HCT116 (cell line): ENCODE measurements at regions of chr17 and their contacts with region 1.

Region 1: DNA sequence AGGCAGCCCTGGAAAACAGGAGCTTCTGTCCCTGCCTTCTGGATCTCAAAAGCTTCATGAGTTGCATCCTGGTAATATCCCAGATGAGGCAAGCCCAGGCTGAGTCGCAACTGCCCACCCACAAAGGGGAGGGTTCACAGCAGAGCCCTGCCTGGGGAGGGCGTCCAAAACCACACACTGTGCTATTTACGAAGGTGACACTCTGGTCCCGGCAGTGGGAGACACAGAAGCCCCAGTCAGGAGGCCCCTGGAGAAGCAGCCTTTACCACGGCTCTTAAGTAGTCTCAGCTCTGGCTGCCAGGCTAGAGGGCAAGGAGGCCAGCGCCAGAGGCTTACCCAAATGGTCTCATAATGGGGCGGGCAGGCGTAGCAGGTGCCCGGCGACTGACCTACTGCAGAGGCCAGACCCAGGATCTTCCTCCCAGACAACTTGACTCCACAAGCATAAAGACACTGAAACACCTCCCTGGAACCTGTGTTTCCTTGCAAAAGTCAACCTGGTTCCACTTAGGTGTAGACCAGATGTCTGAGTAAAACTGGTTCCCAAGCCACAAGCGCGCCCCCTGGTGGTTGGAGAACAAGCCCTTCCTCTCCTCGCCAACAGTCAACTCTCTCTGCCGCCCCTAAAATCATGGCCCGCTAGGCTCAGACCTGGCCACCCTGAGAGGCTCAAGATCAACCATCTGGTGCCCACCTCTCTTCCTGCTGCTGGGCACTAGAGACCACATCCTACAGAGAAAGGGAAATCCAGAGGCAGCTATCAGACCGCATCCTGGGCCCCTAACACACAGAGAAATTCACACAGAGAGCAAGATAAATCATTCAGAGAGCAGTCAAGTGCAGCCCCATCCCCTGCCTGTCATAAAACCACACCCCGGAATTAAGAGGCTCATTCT is 5.2 kb downstream of the AXIN2 start:
- DNase-seq: peak; percentile 66
- ATAC-seq: peak; percentile 43
- H3K4me3 ChIP-seq: peak overlapping the region; percentile 13 to 15; a peak in 3 of 4 replicates
- H3K27ac ChIP-seq: peak overlapping the region; percentile 86
- H3K4me1 ChIP-seq: peaks cover 19 to 41% of the 10 kb centered on the region in 2 experiments
- H3K27me3 ChIP-seq: no peaks in the 10 kb centered on the region
- CTCF ChIP-seq: peak; percentile 69 to 99 (median 99)
- POLR2A ChIP-seq: no peak
- RAD21 ChIP-seq: peak; percentile 78

Region 2: GRCh38 chr17:65278050-65278819 is 278.0 kb before region 1 on chr17:
- CTCF ChIA-PET with region 1: interaction called, 7 read pairs
- POLR2A ChIA-PET with region 1: no interaction called
- RAD21 ChIA-PET with region 1: no interaction called
- intact Hi-C with region 1: loop called (anchors 1 kb)
- DNase-seq: peak; percentile 57
- ATAC-seq: peak; percentile 99
- H3K4me3 ChIP-seq: no peak overlapping the region
- H3K27ac ChIP-seq: no peak overlapping the region
- H3K4me1 ChIP-seq: no peaks in the 10 kb centered on the region; a peak in 1 of 4 replicates
- H3K27me3 ChIP-seq: no peaks in the 10 kb centered on the region
- CTCF ChIP-seq: peak; percentile 59 to 94 (median 91); a peak in 5 of 6 replicates
- POLR2A ChIP-seq: no peak
- RAD21 ChIP-seq: peak; percentile 90

Region 3: GRCh38 chr17:65418628-65419027 is 137.6 kb before region 1 on chr17:
- CTCF ChIA-PET with region 1: interaction called, 7 read pairs
- POLR2A ChIA-PET with region 1: no interaction called
- RAD21 ChIA-PET with region 1: no interaction called
- intact Hi-C with region 1: loop called (anchors 2 kb)
- DNase-seq: no peak
- ATAC-seq: peak; percentile 78
- H3K4me3 ChIP-seq: no peak overlapping the region
- H3K27ac ChIP-seq: no peak overlapping the region
- H3K4me1 ChIP-seq: no peaks in the 10 kb centered on the region; a peak in 1 of 4 replicates
- H3K27me3 ChIP-seq: no peaks in the 10 kb centered on the region
- CTCF ChIP-seq: peak; percentile 25 to 36 (median 30); a peak in 3 of 6 replicates
- POLR2A ChIP-seq: no peak
- RAD21 ChIP-seq: peak; percentile 69

Region 4: GRCh38 chr17:65656382-65657250 is 100.4 kb after region 1 on chr17:
- CTCF ChIA-PET with region 1: no interaction called
- POLR2A ChIA-PET with region 1: no interaction called
- RAD21 ChIA-PET with region 1: no interaction called
- intact Hi-C with region 1: no loop called
- DNase-seq: no peak
- ATAC-seq: no peak
- H3K4me3 ChIP-seq: no peak overlapping the region
- H3K27ac ChIP-seq: no peak overlapping the region
- H3K4me1 ChIP-seq: peaks cover 0 to 15% of the 10 kb centered on the region in 2 experiments; a peak in 2 of 4 replicates
- H3K27me3 ChIP-seq: no peaks in the 10 kb centered on the region
- CTCF ChIP-seq: no peak
- POLR2A ChIP-seq: no peak
- RAD21 ChIP-seq: no peak

Region 5: DNA sequence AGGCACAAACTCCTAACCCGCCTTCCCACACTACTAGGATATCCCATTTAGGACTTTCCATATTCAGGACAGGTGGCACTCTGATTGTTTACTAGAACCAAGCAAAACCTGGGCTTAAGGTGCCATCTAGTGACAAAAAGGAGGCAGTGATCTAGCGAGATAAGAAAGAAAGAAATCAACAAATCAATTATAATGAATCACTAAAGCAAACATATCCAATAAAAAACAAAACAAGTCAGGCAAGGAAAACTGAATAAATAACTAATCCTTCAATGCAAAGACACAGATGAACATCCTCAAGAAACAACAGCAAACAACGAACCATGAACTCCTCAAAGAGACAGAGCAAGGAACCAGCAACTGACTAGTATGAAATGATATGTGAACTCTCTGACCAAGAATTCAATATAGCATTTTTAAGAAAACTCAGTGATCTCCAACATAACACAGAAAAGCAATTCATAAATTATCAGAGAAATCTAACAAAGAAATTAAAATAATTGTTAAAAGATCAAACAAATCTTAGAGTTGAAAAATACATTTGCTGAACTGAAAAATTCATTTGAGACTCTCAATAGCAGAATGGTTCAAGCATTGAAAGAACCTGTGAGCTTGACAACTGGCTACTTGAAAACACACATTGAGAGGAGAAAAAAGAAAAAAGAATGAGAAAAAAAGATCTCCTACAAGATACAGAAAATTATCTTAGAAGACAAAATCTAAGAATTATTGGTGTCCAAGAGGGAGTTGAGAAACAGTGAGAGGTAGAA is 432.0 kb after region 1 on chr17:
- CTCF ChIA-PET with region 1: no interaction called
- POLR2A ChIA-PET with region 1: no interaction called
- RAD21 ChIA-PET with region 1: no interaction called
- intact Hi-C with region 1: loop called (anchors 5 kb)
- DNase-seq: peak; percentile 66
- ATAC-seq: peak; percentile 97
- H3K4me3 ChIP-seq: no peak overlapping the region
- H3K27ac ChIP-seq: no peak overlapping the region
- H3K4me1 ChIP-seq: no peaks in the 10 kb centered on the region
- H3K27me3 ChIP-seq: no peaks in the 10 kb centered on the region
- CTCF ChIP-seq: peak; percentile 71 to 95 (median 89)
- POLR2A ChIP-seq: no peak
- RAD21 ChIP-seq: peak; percentile 95